ENCODE measurements at regions of chr2 and their contacts with region 1.

Region 1: GRCh38 chr2:12501469-12502158 is 215.1 kb upstream of the TRIB2 start:
- DNase-seq: peak; percentile 68 to 73 (median 70)
- H3K4me3 ChIP-seq: no peak overlapping the region
- H3K4me3 Mint-ChIP-seq: peak overlapping the region; percentile 12 to 89 (median 74)
- H3K27ac ChIP-seq: peak overlapping the region; percentile 56
- H3K27ac Mint-ChIP-seq: peak overlapping the region; percentile 83 to 98 (median 88)
- H3K4me1 ChIP-seq: peaks cover 98% of the 10 kb centered on the region
- H3K4me1 Mint-ChIP-seq: peaks cover 81 to 100% (median 92%) of the 10 kb centered on the region in 4 donors
- H3K27me3 ChIP-seq: no peaks in the 10 kb centered on the region
- H3K27me3 Mint-ChIP-seq: no peaks in the 10 kb centered on the region

Region 2: DNA sequence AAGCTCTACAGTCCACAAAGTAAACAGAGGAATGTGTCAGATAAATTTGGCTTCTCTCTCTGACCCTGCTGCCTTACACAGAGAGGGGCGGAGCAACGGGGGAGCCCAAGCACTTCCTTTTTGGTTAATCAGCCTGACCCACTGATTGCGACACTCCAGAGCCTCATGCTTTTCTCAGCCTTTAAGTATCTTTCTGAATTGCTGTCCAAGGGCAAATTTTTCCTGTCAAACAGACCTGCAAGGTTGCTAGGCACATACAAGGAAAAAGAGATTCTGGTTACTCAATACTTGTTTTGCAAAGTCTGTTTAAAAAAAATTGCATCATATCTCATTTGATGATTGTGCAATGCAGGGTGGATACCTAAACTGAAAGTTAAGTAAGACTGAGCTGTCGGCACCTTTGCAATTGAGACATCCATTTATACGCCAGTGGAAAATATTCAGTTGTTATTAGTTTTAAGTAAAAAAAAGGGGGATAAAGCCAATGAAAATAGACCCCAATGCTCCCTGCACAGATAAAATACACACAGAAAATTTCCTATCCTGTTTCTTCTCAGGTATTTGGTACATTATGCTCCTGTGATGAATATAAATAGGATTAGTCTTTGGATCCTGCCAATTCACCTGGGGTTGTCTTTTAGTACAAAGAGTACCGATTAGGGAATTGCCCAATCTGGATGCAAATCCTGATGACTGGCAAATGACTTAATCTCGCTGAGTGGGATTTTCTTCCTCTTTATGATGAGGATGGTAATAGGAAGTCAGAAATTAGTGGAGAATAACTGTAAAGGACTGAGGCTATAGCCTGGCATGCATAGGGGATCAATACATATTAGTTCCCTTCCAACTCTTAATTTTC is 45.1 kb before region 1 on chr2:
- CTCF ChIA-PET with region 1: interaction called, 3 read pairs
- POLR2A ChIA-PET with region 1: interaction called, 15 read pairs
- intact Hi-C with region 1: loop called (anchors 5 kb)
- DNase-seq: peak; percentile 52 to 69 (median 58)
- H3K4me3 ChIP-seq: peak overlapping the region; percentile 15 to 49
- H3K4me3 Mint-ChIP-seq: peak overlapping the region; percentile 76 to 90 (median 82)
- H3K27ac ChIP-seq: peak overlapping the region; percentile 48
- H3K27ac Mint-ChIP-seq: peak overlapping the region; percentile 87 to 96 (median 94)
- H3K4me1 ChIP-seq: peaks cover 37% of the 10 kb centered on the region
- H3K4me1 Mint-ChIP-seq: peaks cover 29 to 46% (median 35%) of the 10 kb centered on the region in 4 donors
- H3K27me3 ChIP-seq: no peaks in the 10 kb centered on the region
- H3K27me3 Mint-ChIP-seq: no peaks in the 10 kb centered on the region

Region 3: DNA sequence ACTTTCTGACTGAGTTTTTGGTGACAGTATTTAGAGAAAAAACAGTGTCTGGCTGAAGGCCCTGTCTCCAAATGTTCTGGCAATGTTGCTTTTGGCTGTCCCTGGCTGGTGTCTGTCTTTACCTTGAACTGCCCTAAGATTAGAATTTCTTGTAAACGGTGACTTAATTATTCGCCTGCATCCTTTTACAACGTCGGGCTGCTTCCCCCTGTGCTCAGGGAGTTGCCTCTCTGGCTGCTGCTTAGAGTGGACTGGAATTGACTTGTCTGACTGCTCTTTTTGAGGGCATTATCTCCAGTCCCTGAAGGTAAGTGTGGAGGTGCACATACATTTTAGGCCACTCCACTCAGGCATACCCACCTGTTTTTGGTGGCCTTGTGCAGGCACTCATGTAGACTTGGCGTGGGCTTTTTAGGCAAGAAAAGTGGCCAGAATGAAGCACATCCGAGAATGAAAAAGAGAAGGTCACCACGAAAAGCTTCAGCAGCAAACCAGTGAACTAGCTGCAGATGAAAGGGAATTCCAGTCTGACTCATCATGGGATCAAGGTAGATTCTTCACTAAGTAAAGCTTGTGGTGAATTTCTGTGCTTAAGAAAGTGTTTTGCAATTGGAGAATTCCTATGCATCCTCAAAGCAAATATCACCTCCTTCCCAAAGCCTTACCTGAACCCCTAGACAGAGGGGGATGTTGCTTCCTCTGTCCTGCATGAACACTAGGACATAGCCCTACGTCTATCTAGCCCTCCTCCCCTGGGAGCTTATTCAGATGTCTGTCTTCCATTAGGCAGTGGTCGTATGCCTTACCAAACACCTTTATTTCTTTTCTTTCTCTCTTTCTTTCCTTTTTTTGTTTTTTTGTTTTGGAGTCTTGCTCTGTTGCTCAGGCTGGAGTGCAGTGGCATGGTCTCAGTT is 15.2 kb before region 1 on chr2:
- CTCF ChIA-PET with region 1: interaction called, 52 read pairs
- POLR2A ChIA-PET with region 1: interaction called, 164 read pairs
- intact Hi-C with region 1: no loop called
- DNase-seq: no peak
- H3K4me3 ChIP-seq: no peak overlapping the region
- H3K4me3 Mint-ChIP-seq: peak overlapping the region in 7 of 8 donors; percentile 13 to 89 (median 81)
- H3K27ac ChIP-seq: no peak overlapping the region
- H3K27ac Mint-ChIP-seq: peak overlapping the region; percentile 79 to 95 (median 92)
- H3K4me1 ChIP-seq: peaks cover 77% of the 10 kb centered on the region
- H3K4me1 Mint-ChIP-seq: peaks cover 57 to 69% (median 67%) of the 10 kb centered on the region in 4 donors
- H3K27me3 ChIP-seq: no peaks in the 10 kb centered on the region
- H3K27me3 Mint-ChIP-seq: no peaks in the 10 kb centered on the region

Region 4: DNA sequence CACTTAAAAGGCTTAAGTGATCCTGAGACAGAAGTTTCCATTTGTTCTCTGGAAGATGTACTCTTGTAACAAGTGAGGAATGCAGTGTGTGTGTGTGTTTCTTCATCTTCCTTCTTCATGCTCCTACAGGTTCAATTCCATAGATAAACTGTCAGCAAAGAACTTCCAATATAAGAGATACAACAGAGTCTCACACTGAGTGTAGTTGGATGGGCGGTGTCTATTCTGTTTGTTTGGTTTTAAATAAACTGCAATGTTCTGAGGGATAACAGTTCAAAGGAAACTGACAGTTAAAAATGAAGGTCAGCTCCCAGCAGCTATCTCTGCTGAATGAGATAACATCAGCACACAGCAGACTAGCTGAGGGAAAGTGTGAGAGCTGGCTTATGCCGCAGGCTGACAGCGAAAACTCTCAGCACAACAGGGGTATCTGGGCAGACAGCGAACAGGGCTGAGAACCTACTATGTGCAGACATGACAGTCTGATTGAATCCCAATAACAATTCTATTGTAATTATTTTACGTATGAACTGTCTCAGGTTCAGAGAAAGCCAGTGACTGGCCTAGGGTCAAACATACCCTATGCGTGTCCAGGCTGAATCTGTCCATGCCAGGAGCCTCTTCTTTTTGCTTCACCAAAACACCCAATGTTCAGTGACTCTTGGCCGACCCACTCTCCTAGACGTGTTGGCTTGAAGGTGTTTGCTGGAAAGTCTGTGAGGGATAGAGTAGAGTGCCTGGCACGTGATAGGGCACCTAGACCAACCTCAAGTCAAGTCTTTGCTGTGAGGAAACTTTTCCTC is 13.2 kb after region 1 on chr2:
- CTCF ChIA-PET with region 1: interaction called, 6 read pairs
- POLR2A ChIA-PET with region 1: interaction called, 54 read pairs
- intact Hi-C with region 1: loop called (anchors 1 kb)
- DNase-seq: peak; percentile 58 to 68 (median 60)
- H3K4me3 ChIP-seq: peak overlapping the region in 1 of 2 donors; percentile 34
- H3K4me3 Mint-ChIP-seq: peak overlapping the region; percentile 2 to 75 (median 69)
- H3K27ac ChIP-seq: peak overlapping the region; percentile 37
- H3K27ac Mint-ChIP-seq: peak overlapping the region; percentile 60 to 90 (median 81)
- H3K4me1 ChIP-seq: peaks cover 65% of the 10 kb centered on the region
- H3K4me1 Mint-ChIP-seq: peaks cover 58 to 79% (median 68%) of the 10 kb centered on the region in 4 donors
- H3K27me3 ChIP-seq: no peaks in the 10 kb centered on the region
- H3K27me3 Mint-ChIP-seq: no peaks in the 10 kb centered on the region

Region 5: DNA sequence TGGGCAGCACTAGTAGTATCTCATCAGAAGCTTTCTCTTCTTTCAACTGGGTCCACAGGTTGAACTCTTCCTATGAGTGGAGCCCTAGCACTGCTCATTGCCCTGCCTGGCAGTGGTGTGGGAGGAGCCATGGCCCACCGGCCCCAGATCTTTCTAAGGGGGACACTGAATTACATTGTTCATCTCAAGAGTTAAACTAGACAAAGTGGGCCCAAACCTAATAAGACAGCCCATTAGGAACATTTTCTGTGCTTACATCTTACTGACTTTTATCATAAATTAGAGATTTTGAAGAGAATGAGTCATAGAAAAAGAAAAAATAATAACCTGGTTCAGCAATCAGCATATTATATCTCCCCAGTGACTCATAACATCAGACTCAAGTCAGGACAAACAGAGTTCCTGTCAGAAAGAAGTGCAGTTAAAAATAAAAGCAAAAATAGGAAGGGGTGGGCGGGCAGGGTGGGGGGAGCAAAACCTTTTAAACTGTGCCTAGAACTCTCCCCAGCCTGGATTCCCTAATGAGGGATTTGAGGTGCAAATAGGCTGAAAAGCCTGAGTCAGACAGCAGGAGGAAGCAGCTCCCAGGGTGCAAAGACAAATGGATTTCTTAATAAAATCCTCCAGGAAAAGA is 53.5 kb after region 1 on chr2:
- CTCF ChIA-PET with region 1: no interaction called
- POLR2A ChIA-PET with region 1: interaction called, 11 read pairs
- intact Hi-C with region 1: loop called (anchors 5 kb)
- DNase-seq: peak in 2 of 5 donors; percentile 18 to 19
- H3K4me3 ChIP-seq: no peak overlapping the region
- H3K4me3 Mint-ChIP-seq: peak overlapping the region; percentile 6 to 75 (median 56)
- H3K27ac ChIP-seq: no peak overlapping the region
- H3K27ac Mint-ChIP-seq: peak overlapping the region; percentile 74 to 94 (median 87)
- H3K4me1 ChIP-seq: peaks cover 31% of the 10 kb centered on the region
- H3K4me1 Mint-ChIP-seq: peaks cover 33 to 49% (median 38%) of the 10 kb centered on the region in 4 donors
- H3K27me3 ChIP-seq: no peaks in the 10 kb centered on the region
- H3K27me3 Mint-ChIP-seq: no peaks in the 10 kb centered on the region

Region 6: GRCh38 chr2:12709207-12709522 is 207.6 kb after region 1 on chr2:
- CTCF ChIA-PET with region 1: interaction called, 3 read pairs
- POLR2A ChIA-PET with region 1: interaction called, 12 read pairs
- intact Hi-C with region 1: no loop called
- DNase-seq: peak; percentile 65 to 78 (median 72)
- H3K4me3 ChIP-seq: no peak overlapping the region
- H3K4me3 Mint-ChIP-seq: peak overlapping the region in 6 of 8 donors; percentile 20 to 79 (median 70)
- H3K27ac ChIP-seq: peak overlapping the region; percentile 44
- H3K27ac Mint-ChIP-seq: peak overlapping the region; percentile 87 to 98 (median 92)
- H3K4me1 ChIP-seq: peaks cover 76% of the 10 kb centered on the region
- H3K4me1 Mint-ChIP-seq: peaks cover 50 to 85% (median 72%) of the 10 kb centered on the region in 4 donors
- H3K27me3 ChIP-seq: no peaks in the 10 kb centered on the region
- H3K27me3 Mint-ChIP-seq: no peaks in the 10 kb centered on the region